Caco-2 (cell line): ENCODE measurements at regions of chr5 and their contacts with region 1.

Region 1: GRCh38 chr5:150656191-150657132 is 4.6 kb upstream of the MYOZ3 start:
- DNase-seq: peak; percentile 74 to 92
- H3K4me3 ChIP-seq: peak overlapping the region; percentile 71
- H3K4me3 Mint-ChIP-seq: peak overlapping the region; percentile 79
- H3K27ac Mint-ChIP-seq: peak overlapping the region; percentile 45
- H3K4me1 ChIP-seq: peaks cover 4% of the 10 kb centered on the region; the same call in 1 of the 2 replicates
- H3K4me1 Mint-ChIP-seq: peaks cover 17% of the 10 kb centered on the region
- H3K27me3 ChIP-seq: no peaks in the 10 kb centered on the region
- H3K27me3 Mint-ChIP-seq: no peaks in the 10 kb centered on the region
- CTCF ChIP-seq: peak; percentile 74 to 87

Region 2: DNA sequence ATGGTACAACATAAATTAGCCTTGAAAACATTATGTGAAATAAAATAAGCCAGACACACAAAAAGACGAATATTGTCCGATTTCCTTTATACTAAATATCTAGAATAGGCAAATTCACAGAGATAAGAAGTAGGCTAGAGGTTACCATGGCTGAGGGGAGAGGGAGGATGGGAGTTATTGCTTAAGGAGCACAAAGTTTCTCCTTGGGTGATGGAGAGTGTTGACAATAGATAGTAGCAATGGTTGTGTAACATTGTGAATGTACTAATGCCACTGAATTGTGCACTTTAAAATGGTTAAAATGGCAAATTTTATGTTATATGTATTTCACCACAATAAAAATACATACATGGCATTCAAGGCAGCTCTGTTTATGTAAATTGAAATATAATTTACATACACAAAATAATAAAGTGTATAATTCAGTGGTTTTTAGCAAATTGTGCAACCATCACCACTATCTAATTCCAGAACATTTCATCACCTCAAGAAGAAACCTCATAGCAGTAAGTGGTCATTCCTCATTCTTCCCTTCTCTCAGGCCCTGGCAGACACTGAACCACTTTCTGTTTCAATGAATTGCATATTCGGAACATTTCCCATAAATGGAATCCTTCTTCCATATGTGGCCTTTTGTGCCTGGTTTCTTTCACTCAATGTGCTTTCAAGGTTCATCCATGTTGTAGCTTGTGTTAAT is 89.3 kb before region 1 on chr5:
- CTCF ChIA-PET with region 1: interaction called, 56 read pairs
- POLR2A ChIA-PET with region 1: no interaction called
- intact Hi-C with region 1: loop called (anchors 1 kb)
- DNase-seq: peak in 1 of 2 experiments; percentile 54
- H3K4me3 ChIP-seq: no peak overlapping the region
- H3K4me3 Mint-ChIP-seq: no peak overlapping the region
- H3K27ac Mint-ChIP-seq: peak overlapping the region; percentile 31
- H3K4me1 ChIP-seq: peaks cover 24% of the 10 kb centered on the region
- H3K4me1 Mint-ChIP-seq: peaks cover 22% of the 10 kb centered on the region
- H3K27me3 ChIP-seq: no peaks in the 10 kb centered on the region
- H3K27me3 Mint-ChIP-seq: no peaks in the 10 kb centered on the region
- CTCF ChIP-seq: no peak

Region 3: GRCh38 chr5:150589871-150590601 is 66.4 kb before region 1 on chr5:
- CTCF ChIA-PET with region 1: no interaction called
- POLR2A ChIA-PET with region 1: no interaction called
- intact Hi-C with region 1: loop called (anchors 1 kb)
- DNase-seq: peak in 1 of 2 experiments; percentile 58
- H3K4me3 ChIP-seq: no peak overlapping the region
- H3K4me3 Mint-ChIP-seq: no peak overlapping the region
- H3K27ac Mint-ChIP-seq: no peak overlapping the region
- H3K4me1 ChIP-seq: peaks cover 60% of the 10 kb centered on the region
- H3K4me1 Mint-ChIP-seq: peaks cover 14% of the 10 kb centered on the region
- H3K27me3 ChIP-seq: no peaks in the 10 kb centered on the region
- H3K27me3 Mint-ChIP-seq: no peaks in the 10 kb centered on the region
- CTCF ChIP-seq: peak; percentile 20 to 56

Region 4: GRCh38 chr5:150640311-150641005 is 16.0 kb before region 1 on chr5 and contains the start of gene SYNPO:
- CTCF ChIA-PET with region 1: interaction called, 6 read pairs
- POLR2A ChIA-PET with region 1: no interaction called
- intact Hi-C with region 1: loop called (anchors 2 kb)
- DNase-seq: peak; percentile 56 to 60
- H3K4me3 ChIP-seq: peak within 1 kb of the TSS; percentile 33
- H3K4me3 Mint-ChIP-seq: peak within 1 kb of the TSS; percentile 61
- H3K27ac Mint-ChIP-seq: peak within 1 kb of the TSS; percentile 79
- H3K4me1 ChIP-seq: peaks cover 80% of the 10 kb centered on the region
- H3K4me1 Mint-ChIP-seq: peaks cover 52% of the 10 kb centered on the region
- H3K27me3 ChIP-seq: no peaks in the 10 kb centered on the region
- H3K27me3 Mint-ChIP-seq: no peaks in the 10 kb centered on the region
- CTCF ChIP-seq: no peak
- total RNA-seq, gene SYNPO: 22.4 and 25.1 TPM in 2 replicates

Region 5: DNA sequence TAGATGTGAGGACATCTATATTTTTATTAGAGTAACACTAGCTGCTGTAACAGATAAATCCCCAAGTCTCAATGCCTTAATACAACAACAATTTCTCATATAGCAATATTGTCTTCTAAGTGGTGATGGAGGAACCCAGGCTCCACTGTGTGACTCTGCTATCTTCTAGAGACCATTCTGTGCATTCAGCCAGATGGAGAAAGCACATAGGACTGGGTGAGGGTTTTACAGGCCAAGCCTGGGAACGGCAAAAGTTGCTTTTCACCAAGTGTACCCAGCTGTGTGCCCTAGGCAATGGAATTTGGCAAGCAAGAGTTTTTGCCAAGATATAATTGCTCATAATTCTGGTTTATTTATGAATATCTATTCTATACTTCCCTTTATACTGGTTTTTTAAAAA is 32.7 kb after region 1 on chr5:
- CTCF ChIA-PET with region 1: no interaction called
- POLR2A ChIA-PET with region 1: no interaction called
- intact Hi-C with region 1: no loop called
- DNase-seq: no peak
- H3K4me3 ChIP-seq: no peak overlapping the region
- H3K4me3 Mint-ChIP-seq: no peak overlapping the region
- H3K27ac Mint-ChIP-seq: no peak overlapping the region
- H3K4me1 ChIP-seq: no peaks in the 10 kb centered on the region
- H3K4me1 Mint-ChIP-seq: no peaks in the 10 kb centered on the region
- H3K27me3 ChIP-seq: no peaks in the 10 kb centered on the region
- H3K27me3 Mint-ChIP-seq: no peaks in the 10 kb centered on the region
- CTCF ChIP-seq: no peak

Region 6: DNA sequence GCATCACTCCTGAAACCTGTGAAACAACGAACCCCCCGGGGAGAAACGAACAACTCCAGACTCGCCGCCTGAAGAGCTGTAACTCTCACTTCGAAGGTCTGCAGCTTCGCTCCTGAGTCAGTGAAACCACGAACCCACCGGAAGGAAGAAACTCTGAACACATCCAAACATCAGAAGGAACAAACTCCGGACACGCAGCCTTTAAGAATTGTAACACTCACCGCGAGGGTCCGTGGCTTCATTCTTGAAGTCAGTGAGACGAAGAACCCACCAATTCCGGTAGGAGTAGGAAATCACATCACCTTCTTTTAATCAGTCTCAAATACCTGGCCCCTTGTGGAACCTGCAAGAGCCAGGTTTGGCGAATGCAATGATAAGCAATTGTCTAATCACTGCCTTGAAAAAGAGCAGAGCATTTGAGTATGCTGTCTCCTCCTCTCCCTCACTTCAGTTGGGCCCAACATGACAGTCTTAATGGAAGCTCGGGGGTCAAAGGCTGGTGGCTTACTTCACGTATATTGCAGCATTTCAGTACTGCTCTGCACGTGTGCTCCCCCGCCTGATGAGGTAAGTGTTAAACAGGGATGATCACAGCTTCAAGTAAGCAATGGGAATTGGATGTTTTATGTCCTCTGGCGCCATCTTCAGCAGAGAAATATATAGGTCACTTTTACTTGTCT is 190.3 kb after region 1 on chr5:
- CTCF ChIA-PET with region 1: interaction called, 3 read pairs
- POLR2A ChIA-PET with region 1: no interaction called
- intact Hi-C with region 1: loop called (anchors 2 kb)
- DNase-seq: peak; percentile 78 to 79
- H3K4me3 ChIP-seq: no peak overlapping the region
- H3K4me3 Mint-ChIP-seq: no peak overlapping the region
- H3K27ac Mint-ChIP-seq: no peak overlapping the region
- H3K4me1 ChIP-seq: peaks cover 5% of the 10 kb centered on the region; the same call in 1 of the 2 replicates
- H3K4me1 Mint-ChIP-seq: no peaks in the 10 kb centered on the region
- H3K27me3 ChIP-seq: no peaks in the 10 kb centered on the region
- H3K27me3 Mint-ChIP-seq: no peaks in the 10 kb centered on the region
- CTCF ChIP-seq: peak; percentile 65 to 74